Activated B cell treated with CpG ODN at 0.5 μM for 24 hours (primary cell): ENCODE measurements at regions of chr19 and their contacts with region 1.

Region 1: GRCh38 chr19:37906869-37907734 is at the start of gene SIPA1L3:
- DNase-seq: peak; percentile 89
- ATAC-seq: peak; percentile 92
- H3K4me3 Mint-ChIP-seq: peak within 1 kb of the TSS; percentile 86
- H3K27ac Mint-ChIP-seq: peak within 1 kb of the TSS; percentile 94
- H3K4me1 Mint-ChIP-seq: peaks cover 61% of the 10 kb centered on the region
- H3K27me3 Mint-ChIP-seq: no peaks in the 10 kb centered on the region
- CTCF ChIP-seq: no peak
- total RNA-seq, gene SIPA1L3: 120 and 145 TPM in 2 replicates

Region 2: GRCh38 chr19:37931881-37932655 is 25.0 kb after region 1 on chr19:
- CTCF ChIA-PET with region 1: interaction called, 11 read pairs
- POLR2A ChIA-PET with region 1: interaction called, 75 read pairs
- intact Hi-C with region 1: loop called (anchors 1 kb)
- DNase-seq: peak; percentile 52
- ATAC-seq: peak; percentile 30
- H3K4me3 Mint-ChIP-seq: peak overlapping the region; percentile 83
- H3K27ac Mint-ChIP-seq: peak overlapping the region; percentile 92
- H3K4me1 Mint-ChIP-seq: peaks cover 94% of the 10 kb centered on the region
- H3K27me3 Mint-ChIP-seq: no peaks in the 10 kb centered on the region
- CTCF ChIP-seq: no peak

Region 3: DNA sequence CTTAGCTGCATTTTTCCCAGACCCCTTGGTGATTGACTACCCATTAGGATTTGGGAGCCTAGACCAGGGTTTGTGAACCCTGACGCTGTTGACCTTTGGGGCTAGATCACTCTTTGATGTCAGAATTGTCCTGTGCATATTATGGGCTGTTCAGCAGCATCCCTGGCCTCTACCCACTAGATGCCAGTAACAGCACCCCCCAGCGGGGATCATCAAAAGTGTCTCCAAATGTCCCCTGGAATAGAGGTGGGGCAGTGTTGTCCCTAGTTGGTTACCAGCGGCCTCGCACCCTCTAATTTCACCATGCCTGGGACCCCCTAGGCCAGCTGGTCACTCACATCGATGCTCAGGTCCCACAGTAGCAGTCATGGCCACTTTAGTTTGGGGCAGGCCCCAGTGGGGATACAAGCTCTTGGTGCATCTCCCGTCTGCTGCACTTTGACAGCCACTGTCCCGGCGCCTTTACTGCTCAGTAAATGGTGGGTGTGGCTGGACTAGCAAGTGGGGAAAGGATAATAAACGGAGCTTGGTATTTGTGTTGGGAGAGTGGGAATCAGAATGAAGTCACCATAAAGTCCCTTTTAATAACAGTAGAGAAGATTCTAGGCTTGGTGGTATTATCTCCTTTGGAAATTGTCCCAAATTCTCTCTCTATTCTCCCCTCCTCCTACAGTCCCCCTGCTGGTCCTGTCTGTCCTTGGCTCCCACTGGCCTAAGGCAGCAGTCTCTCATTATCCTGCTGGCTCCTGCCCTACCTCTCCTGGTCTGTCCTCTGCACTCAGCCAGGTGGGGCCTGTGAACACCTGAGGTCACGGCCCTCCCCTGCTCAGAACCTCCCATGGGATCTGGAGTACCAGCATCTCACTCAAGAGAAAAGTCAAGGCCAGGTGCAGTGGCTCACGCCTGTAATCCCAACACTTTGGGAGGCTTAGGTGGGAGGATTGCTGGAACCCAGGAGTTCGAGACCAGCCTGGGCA is 80.5 kb after region 1 on chr19:
- CTCF ChIA-PET with region 1: interaction called, 5 read pairs
- POLR2A ChIA-PET with region 1: interaction called, 14 read pairs
- intact Hi-C with region 1: no loop called
- DNase-seq: no peak
- ATAC-seq: no peak
- H3K4me3 Mint-ChIP-seq: no peak overlapping the region
- H3K27ac Mint-ChIP-seq: peak overlapping the region; percentile 96
- H3K4me1 Mint-ChIP-seq: peaks cover 86% of the 10 kb centered on the region
- H3K27me3 Mint-ChIP-seq: no peaks in the 10 kb centered on the region
- CTCF ChIP-seq: no peak

Region 4: GRCh38 chr19:38042132-38042531 is 135.0 kb after region 1 on chr19:
- CTCF ChIA-PET with region 1: interaction called, 77 read pairs
- POLR2A ChIA-PET with region 1: interaction called, 113 read pairs
- intact Hi-C with region 1: no loop called
- DNase-seq: no peak
- ATAC-seq: no peak
- H3K4me3 Mint-ChIP-seq: no peak overlapping the region
- H3K27ac Mint-ChIP-seq: peak overlapping the region; percentile 31
- H3K4me1 Mint-ChIP-seq: peaks cover 57% of the 10 kb centered on the region
- H3K27me3 Mint-ChIP-seq: no peaks in the 10 kb centered on the region
- CTCF ChIP-seq: no peak

Region 5: GRCh38 chr19:38095411-38096308 is 188.6 kb after region 1 on chr19:
- CTCF ChIA-PET with region 1: interaction called, 33 read pairs
- POLR2A ChIA-PET with region 1: interaction called, 15 read pairs
- intact Hi-C with region 1: loop called (anchors 1 kb)
- DNase-seq: peak; percentile 59
- ATAC-seq: peak; percentile 85
- H3K4me3 Mint-ChIP-seq: no peak overlapping the region
- H3K27ac Mint-ChIP-seq: peak overlapping the region; percentile 85
- H3K4me1 Mint-ChIP-seq: peaks cover 18% of the 10 kb centered on the region
- H3K27me3 Mint-ChIP-seq: no peaks in the 10 kb centered on the region
- CTCF ChIP-seq: peak; percentile 33

Region 6: GRCh38 chr19:38142176-38143035 is 235.3 kb after region 1 on chr19:
- CTCF ChIA-PET with region 1: interaction called, 35 read pairs
- POLR2A ChIA-PET with region 1: no interaction called
- intact Hi-C with region 1: loop called (anchors 2 kb)
- DNase-seq: peak; percentile 22
- ATAC-seq: peak; percentile 79
- H3K4me3 Mint-ChIP-seq: no peak overlapping the region
- H3K27ac Mint-ChIP-seq: peak overlapping the region; percentile 24
- H3K4me1 Mint-ChIP-seq: no peaks in the 10 kb centered on the region
- H3K27me3 Mint-ChIP-seq: no peaks in the 10 kb centered on the region
- CTCF ChIP-seq: no peak

Region 7: DNA sequence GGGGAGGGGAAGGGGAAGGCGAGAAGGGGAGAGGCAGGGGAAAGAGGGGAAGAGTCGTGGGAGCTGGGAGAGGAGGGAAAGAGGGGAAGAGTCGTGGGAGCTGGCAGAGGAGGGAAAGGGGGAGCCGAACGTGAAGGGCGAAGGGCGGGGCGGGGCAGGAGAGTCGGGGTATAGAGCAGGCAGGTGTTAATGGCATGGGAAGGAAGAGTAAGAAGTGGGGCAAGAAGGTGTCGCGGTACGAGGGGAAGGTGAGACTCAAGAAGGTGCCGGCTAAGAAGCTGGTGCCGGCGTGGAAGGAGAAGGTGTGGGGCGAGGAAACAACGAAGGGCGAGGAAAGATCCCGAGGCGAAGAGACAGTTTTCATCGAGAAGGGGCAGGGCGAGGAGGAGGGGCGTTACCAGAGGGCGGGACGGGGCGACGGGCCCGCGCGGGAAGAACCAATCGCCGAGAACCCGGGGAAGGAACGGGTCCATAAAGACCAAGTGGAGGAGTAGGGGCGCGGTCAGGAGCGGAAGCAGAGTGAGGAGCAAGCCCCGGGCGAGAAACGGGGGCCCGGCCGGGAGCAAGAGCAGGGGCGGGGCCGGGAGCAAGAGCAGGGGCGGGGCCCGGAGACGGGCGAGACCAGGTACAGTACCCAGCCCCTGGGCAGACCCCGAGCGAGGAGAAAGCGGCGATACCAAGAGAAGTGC is 429.0 kb after region 1 on chr19:
- CTCF ChIA-PET with region 1: interaction called, 8 read pairs
- POLR2A ChIA-PET with region 1: no interaction called
- intact Hi-C with region 1: loop called (anchors 1 kb)
- DNase-seq: peak; percentile 91
- ATAC-seq: peak; percentile 64
- H3K4me3 Mint-ChIP-seq: peak overlapping the region; percentile 91
- H3K27ac Mint-ChIP-seq: peak overlapping the region; percentile 97
- H3K4me1 Mint-ChIP-seq: peaks cover 8% of the 10 kb centered on the region
- H3K27me3 Mint-ChIP-seq: no peaks in the 10 kb centered on the region
- CTCF ChIP-seq: no peak